GM12878 (cell line): ENCODE measurements at regions of chr9 and their contacts with region 1.

Region 1: GRCh38 chr9:77224746-77225312 is 47.5 kb downstream of the VPS13A start:
- DNase-seq: no peak
- ATAC-seq: no peak
- H3K4me3 ChIP-seq: no peak overlapping the region
- H3K27ac ChIP-seq: no peak overlapping the region
- H3K4me1 ChIP-seq: no peaks in the 10 kb centered on the region
- H3K27me3 ChIP-seq: no peaks in the 10 kb centered on the region
- CTCF ChIP-seq: no peak
- EP300 ChIP-seq: no peak
- POLR2A ChIP-seq: no peak
- RAD21 ChIP-seq: no peak

Region 2: GRCh38 chr9:77283991-77284390 is 59.2 kb after region 1 on chr9:
- CTCF ChIA-PET with region 1: no interaction called
- POLR2A ChIA-PET with region 1: no interaction called
- RAD21 ChIA-PET with region 1: no interaction called
- SMC1A ChIA-PET with region 1: no interaction called
- in situ Hi-C with region 1: no loop called
- intact Hi-C with region 1: loop called (anchors 10 kb)
- DNase-seq: no peak
- ATAC-seq: no peak
- H3K4me3 ChIP-seq: no peak overlapping the region
- H3K27ac ChIP-seq: no peak overlapping the region
- H3K4me1 ChIP-seq: no peaks in the 10 kb centered on the region
- H3K27me3 ChIP-seq: no peaks in the 10 kb centered on the region
- CTCF ChIP-seq: no peak
- EP300 ChIP-seq: no peak
- POLR2A ChIP-seq: no peak
- RAD21 ChIP-seq: no peak